ENCODE measurements at regions of chr3 and their contacts with region 1.

Region 1: DNA sequence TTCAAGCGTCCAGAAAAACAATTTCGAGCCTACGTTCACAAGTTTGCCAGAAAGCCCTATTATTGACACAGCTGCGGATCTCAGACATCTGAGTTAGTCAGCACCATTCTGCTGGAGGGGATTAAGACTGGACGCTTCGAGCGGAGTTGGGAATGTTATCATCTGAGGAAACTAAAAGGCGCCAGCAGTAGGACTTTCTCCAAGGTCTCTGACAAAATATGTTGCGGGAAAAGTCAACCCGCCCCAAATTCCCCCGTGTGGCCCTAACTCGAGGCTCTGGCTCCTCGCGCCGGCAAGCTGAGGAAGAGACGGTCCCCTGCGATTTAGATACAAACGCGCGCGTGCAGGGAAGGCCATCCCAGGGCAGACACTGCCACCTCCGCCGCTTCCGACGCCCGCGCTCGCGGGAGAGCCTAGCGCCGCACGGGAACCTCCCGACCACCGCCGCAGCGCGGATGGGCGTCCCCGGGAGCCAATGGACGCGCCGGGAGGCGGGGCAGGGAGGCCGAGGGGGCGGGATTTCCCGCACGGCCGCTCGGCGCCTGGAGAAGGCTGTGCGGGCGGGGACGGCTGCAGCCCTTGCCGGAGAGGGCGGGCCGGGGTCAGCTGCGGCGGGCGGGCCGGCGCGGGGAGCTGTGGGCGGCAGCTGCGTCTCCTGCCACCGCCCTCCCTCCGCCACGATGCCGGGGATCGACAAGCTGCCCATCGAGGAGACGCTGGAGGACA is at the start of gene APPL1:
- DNase-seq: peak; percentile 94 to 96
- ATAC-seq: peak; percentile 95 to 98 (median 97)
- H3K4me3 ChIP-seq: peak within 1 kb of the TSS; percentile 89
- H3K27ac ChIP-seq: peak within 1 kb of the TSS; percentile 98
- H3K4me1 ChIP-seq: peaks cover 20% of the 10 kb centered on the region
- H3K27me3 ChIP-seq: no peaks in the 10 kb centered on the region
- CTCF ChIP-seq: no peak
- total RNA-seq, gene APPL1: 34.9 to 56.4 (median 50.9) TPM

Region 2: DNA sequence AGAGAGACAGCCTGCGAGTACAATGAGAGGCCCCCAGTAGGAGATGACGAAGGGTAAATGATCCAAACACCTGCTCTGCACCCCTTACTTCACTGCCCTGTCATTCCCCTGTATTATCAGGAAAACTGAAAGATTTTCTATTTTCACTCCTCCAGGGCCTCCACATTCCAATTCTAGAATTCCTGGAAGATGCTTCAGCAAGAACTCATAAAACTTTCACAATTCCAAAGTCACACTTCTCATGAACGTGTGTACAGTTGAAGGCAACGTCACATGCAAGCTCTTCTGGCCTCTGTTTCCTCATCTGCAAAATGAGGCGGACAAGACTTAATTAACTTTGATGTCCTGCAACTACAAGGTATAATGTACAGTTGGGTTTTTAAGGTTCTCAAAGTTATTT is 229.7 kb before region 1 on chr3:
- intact Hi-C with region 1: loop called in 1 of 2 experiments (anchors 10 kb)
- DNase-seq: no peak
- ATAC-seq: peak in 2 of 4 donors; percentile 19 to 32
- H3K4me3 ChIP-seq: no peak overlapping the region
- H3K27ac ChIP-seq: no peak overlapping the region
- H3K4me1 ChIP-seq: no peaks in the 10 kb centered on the region
- H3K27me3 ChIP-seq: no peaks in the 10 kb centered on the region
- CTCF ChIP-seq: no peak

Region 3: GRCh38 chr3:57100046-57100695 is 127.2 kb before region 1 on chr3:
- intact Hi-C with region 1: loop called in 1 of 2 experiments (anchors 5 kb)
- DNase-seq: peak in 1 of 2 donors; percentile 32
- ATAC-seq: peak; percentile 75 to 91 (median 80)
- H3K4me3 ChIP-seq: no peak overlapping the region
- H3K27ac ChIP-seq: no peak overlapping the region
- H3K4me1 ChIP-seq: peaks cover 3% of the 10 kb centered on the region
- H3K27me3 ChIP-seq: no peaks in the 10 kb centered on the region
- CTCF ChIP-seq: peak; percentile 94

Region 4: DNA sequence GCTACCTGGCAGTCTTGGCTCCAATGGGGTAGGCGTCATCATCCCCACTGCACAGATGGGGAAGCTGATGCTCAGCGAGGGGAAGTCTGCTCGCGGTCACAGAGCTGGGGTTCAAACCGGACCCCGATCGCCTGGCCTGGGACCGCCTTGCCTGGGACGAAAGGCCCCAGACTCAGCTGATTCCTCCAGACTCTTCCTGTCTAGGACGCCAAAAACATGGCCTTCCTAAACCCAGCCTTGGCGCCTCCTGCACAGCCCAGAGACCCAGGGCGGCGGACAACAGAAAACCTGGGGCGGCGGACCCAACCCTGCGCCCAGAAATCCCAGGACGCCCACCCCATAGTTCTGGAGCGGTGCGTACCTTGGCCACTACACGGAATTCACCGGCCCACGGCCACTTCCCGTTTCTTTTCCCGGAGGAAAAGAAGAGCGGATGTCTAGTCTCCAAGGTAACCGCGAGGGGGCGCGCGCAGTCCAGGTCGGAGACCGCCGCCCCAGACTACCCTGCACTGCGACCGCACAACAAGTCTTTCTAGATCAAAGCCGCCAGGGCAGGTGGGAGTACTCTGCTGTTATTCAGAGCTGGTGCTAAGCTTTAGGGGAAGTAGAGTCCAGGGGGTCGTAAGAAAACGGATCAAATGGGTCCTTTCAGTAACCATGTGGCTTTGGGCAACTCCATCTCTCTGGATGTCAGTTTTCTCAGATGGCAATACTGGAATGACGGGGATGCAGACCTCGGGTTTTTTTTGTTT is 57.3 kb before region 1 on chr3:
- intact Hi-C with region 1: loop called (anchors 5 kb)
- DNase-seq: peak; percentile 82 to 86
- ATAC-seq: peak; percentile 76 to 92 (median 83)
- H3K4me3 ChIP-seq: peak overlapping the region; percentile 64
- H3K27ac ChIP-seq: no peak overlapping the region
- H3K4me1 ChIP-seq: no peaks in the 10 kb centered on the region
- H3K27me3 ChIP-seq: no peaks in the 10 kb centered on the region
- CTCF ChIP-seq: peak; percentile 83

Measured in psoas muscle (tissue), 8 donors.